Heart right ventricle (tissue), 16 donors: ENCODE measurements at regions of chr2 and their contacts with region 1.

Region 1: DNA sequence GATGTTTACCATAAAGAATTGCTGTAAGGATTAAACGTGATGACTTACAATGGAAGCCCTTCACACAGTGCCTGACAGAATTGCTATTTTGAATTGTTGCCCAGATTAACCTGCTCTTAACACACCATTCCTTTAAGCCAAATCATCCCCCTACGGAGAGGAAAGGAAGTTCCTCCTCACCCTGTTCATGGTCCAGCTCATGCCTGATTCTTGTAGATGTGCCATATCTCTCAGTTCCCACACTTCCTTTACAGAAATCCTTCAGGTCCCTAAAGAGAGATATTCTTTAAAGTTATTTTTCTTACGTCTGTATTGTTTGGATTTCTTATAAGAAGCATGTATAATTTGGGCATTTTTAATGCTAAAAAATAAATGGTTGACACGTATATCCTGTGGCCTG is 127.5 kb upstream of the DAPL1 start:
- DNase-seq: no peak
- ATAC-seq: peak; percentile 42 to 79 (median 64)
- H3K4me3 ChIP-seq: no peak overlapping the region
- H3K27ac ChIP-seq: peak overlapping the region in 7 of 10 donors; percentile 28 to 77 (median 62)
- H3K4me1 ChIP-seq: peaks cover 3 to 66% (median 36%) of the 10 kb centered on the region in 9 donors
- H3K27me3 ChIP-seq: no peaks in the 10 kb centered on the region
- CTCF ChIP-seq: no peak

Region 2: DNA sequence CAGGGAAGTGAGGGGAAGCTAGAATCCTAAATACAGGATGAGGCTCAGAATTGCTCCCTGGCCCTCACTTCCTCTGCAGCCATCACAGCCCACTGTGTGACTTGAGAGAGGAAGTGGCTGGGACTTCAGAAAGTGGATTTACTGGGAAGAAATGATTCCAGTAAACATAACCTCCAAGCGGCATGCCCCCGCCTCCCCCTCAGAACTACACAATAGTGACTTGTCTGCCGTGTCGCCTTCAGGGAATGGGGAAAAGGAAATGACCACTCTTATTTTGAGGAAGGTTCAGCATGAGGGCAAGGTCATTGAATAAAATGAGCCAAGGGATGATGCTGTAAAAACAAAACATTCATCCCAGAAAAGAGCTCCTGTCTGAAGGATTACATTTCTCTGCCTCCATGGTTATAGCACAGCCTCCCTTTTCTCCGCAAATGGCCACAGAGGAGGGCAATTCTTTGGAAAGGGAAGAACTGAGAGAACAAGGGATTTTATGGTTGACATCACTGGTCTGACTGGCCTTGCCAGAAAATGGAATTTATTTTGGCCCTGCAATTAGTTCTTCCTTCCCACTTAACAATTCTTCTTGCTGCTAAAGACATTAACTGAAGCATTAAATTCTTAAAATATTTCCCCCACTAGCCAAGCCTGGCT is 48.7 kb after region 1 on chr2:
- intact Hi-C with region 1: loop called in 3 of 10 experiments (anchors 5 to 10 kb)
- DNase-seq: peak; percentile 43 to 88
- ATAC-seq: peak; percentile 83 to 92 (median 88)
- H3K4me3 ChIP-seq: no peak overlapping the region
- H3K27ac ChIP-seq: peak overlapping the region; percentile 63 to 94 (median 82)
- H3K4me1 ChIP-seq: peaks cover 0 to 49% (median 34%) of the 10 kb centered on the region in 9 donors
- H3K27me3 ChIP-seq: no peaks in the 10 kb centered on the region
- CTCF ChIP-seq: no peak

Region 3: GRCh38 chr2:158723917-158724690 is 56.5 kb after region 1 on chr2:
- intact Hi-C with region 1: loop called in 3 of 10 experiments (anchors 5 to 10 kb)
- DNase-seq: no peak
- ATAC-seq: no peak
- H3K4me3 ChIP-seq: no peak overlapping the region
- H3K27ac ChIP-seq: no peak overlapping the region
- H3K4me1 ChIP-seq: peaks cover 0 to 44% (median 14%) of the 10 kb centered on the region in 9 donors
- H3K27me3 ChIP-seq: no peaks in the 10 kb centered on the region
- CTCF ChIP-seq: peak in 3 of 9 donors; percentile 10 to 18 (median 15)